ENCODE measurements at regions of chr9 and their contacts with region 1.

Region 1: DNA sequence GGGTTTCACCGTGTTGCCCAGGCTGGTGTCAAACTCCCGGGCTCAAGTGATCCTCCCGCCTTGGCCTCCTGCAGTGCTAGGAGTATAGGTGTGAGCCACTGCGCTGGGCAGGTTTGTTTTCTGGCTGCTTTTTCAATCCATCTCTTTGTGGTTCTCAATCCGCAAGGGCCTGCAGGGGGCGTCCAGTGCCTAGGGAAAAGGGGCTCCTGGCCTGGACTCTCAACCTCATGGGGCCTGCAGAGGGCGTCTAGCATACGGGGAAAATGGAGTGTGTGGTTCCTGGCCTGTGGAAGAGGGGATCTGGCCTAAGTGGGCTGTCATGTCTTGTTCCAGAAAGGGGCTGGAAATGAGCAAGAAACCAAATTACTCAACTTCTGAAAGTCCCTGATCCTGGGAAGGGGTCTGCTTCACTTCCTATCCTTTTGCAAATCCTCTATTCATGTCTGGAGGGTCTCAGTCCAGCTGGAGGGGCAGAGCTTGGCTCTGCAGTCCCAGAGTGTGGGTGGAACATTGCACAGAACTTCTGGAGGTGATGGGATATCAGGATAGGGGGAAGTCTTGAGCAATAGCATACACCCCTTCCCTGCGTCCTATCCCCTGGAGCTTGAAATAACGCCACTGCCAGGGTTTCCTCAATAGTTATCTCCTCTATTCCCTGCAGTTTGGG is 12.7 kb upstream of the CCL27 start:
- DNase-seq: peak; percentile 55 to 71 (median 56)
- H3K4me3 ChIP-seq: no peak overlapping the region
- H3K4me3 Mint-ChIP-seq: no peak overlapping the region
- H3K27ac ChIP-seq: no peak overlapping the region
- H3K27ac Mint-ChIP-seq: no peak overlapping the region
- H3K4me1 ChIP-seq: no peaks in the 10 kb centered on the region
- H3K4me1 Mint-ChIP-seq: no peaks in the 10 kb centered on the region
- H3K27me3 ChIP-seq: no peaks in the 10 kb centered on the region
- H3K27me3 Mint-ChIP-seq: peaks cover 0 to 4% (median 0%) of the 10 kb centered on the region in 3 donors
- CTCF ChIP-seq: peak; percentile 68

Region 2: GRCh38 chr9:34701769-34702736 is 26.9 kb after region 1 on chr9:
- intact Hi-C with region 1: loop called in 1 of 2 experiments (anchors 1 kb)
- DNase-seq: peak; percentile 60 to 67 (median 60)
- H3K4me3 ChIP-seq: peak overlapping the region; percentile 27 to 83 (median 31)
- H3K4me3 Mint-ChIP-seq: peak overlapping the region; percentile 71 to 85
- H3K27ac ChIP-seq: no peak overlapping the region
- H3K27ac Mint-ChIP-seq: peak overlapping the region in 1 of 7 donors; percentile 70
- H3K4me1 ChIP-seq: peaks cover 12 to 13% of the 10 kb centered on the region in 2 donors
- H3K4me1 Mint-ChIP-seq: peaks cover 9% of the 10 kb centered on the region
- H3K27me3 ChIP-seq: peaks cover 2 to 15% of the 10 kb centered on the region in 2 donors
- H3K27me3 Mint-ChIP-seq: peaks cover 16 to 29% (median 21%) of the 10 kb centered on the region in 3 donors
- CTCF ChIP-seq: peak; percentile 77

Region 3: DNA sequence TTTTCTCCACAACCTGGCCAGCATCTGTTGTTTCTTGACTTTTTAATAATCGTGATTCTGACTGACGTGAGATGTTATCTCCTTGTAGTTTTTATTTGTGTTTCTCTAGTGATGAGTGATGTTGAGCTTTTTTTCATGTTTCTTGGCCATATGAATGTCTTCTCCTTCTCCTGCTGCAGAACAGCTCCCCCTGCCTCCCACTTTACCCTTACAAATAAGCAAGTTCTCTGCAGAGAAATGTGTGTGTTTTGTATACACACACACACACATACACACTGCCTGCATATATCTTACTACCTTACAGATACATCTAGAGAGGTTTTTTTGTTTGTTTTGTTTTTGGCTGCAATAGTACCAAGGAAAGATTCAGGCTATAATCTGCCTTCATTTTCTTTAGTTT is 194.2 kb after region 1 on chr9:
- intact Hi-C with region 1: no loop called
- DNase-seq: no peak
- H3K4me3 ChIP-seq: no peak overlapping the region
- H3K4me3 Mint-ChIP-seq: no peak overlapping the region
- H3K27ac ChIP-seq: no peak overlapping the region
- H3K27ac Mint-ChIP-seq: no peak overlapping the region
- H3K4me1 ChIP-seq: no peaks in the 10 kb centered on the region
- H3K4me1 Mint-ChIP-seq: no peaks in the 10 kb centered on the region
- H3K27me3 ChIP-seq: peaks cover 0 to 4% of the 10 kb centered on the region in 2 donors
- H3K27me3 Mint-ChIP-seq: peaks cover 3 to 13% (median 8%) of the 10 kb centered on the region in 3 donors
- CTCF ChIP-seq: peak; percentile 22

Measured in CD14-positive monocyte (primary cell).